HEK293T (cell line): ENCODE measurements at regions of chr12 and their contacts with region 1.

Region 1: DNA sequence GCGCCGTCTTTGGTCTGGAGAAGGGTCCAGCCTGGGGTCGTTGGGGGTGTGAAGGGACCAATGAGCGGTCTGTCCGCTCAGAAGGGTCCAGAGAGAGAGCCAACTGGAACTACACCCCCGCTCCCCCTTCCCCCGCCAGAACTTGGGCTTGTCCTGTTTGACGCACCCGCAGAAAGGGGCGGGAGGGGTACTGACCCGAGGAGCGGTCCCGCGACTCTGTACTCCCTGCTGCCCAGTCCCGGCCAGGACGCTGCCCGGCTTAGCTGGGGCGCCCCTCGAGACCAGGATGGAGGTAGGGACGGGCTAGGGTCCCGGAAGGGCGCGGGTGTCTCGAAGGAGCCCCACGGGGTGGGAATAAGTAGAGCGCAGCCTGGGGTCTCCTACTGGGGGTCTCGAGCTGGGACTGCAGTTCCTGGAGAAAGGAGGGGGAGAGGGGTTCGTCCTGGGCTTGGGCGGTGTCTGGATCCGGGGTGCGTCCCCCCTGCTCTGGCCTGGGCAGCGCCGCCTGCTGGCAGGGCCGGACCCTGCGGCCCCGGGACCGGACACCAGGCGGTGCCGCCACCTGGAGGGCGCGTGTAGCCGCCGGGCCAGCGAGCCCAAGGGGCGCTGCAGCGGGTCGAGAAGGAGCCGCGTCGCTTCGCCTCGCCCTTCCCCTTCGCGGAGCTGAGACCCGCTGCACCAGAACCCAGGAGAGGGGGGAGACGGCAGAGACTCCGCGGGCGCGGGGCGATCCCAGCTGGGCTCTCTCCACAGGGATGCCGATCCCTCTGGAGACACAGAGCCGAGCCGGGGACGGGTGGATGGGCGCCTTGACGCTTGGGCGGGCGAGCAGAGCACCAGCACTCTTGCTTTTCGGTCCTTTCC is 3.8 kb upstream of the CACNB3 start:
- DNase-seq: peak; percentile 85

Region 2: DNA sequence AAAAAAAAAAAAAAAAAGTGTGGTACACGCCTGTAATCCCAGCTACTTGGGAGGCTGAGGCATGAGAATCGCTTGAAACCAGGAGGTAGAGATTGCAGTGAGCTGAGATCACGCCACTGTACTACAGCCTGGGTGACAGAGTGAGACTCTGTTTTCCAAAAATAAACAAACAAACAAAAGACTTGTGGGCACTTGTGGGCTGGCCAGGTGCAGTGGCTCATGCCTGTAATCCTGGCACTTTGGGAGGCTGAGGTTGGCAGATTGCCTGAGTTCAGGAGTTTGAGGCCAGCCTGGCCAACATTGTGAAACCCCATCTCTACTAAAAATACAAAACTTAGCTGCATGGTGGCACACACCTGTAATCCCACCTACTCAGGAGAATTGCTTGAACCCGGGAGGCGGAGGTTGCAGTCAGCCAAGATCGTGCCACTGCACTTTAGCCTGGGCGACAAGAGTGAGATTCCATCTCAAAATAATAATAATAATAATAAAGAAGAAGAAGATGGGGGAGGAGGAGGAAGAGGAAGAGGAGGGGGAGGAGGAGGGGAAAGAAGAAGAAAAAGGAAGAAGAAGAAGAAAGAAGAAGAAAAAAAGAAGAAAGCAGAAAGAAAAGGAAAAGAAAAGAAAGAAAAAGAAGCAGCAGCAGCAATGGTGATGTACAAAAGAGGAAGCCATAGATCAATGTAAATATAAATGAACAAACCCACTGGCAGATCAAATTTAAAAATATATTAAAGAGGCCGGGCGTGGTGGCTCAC is 70.1 kb before region 1 on chr12:
- CTCF ChIA-PET with region 1: no interaction called
- POLR2A ChIA-PET with region 1: no interaction called
- DNase-seq: no peak

Region 3: GRCh38 chr12:48826209-48826894 is 11.9 kb after region 1 on chr12:
- CTCF ChIA-PET with region 1: interaction called, 10 read pairs
- POLR2A ChIA-PET with region 1: interaction called, 14 read pairs
- DNase-seq: no peak